ENCODE measurements at regions of chr18 and their contacts with region 1.

Region 1: DNA sequence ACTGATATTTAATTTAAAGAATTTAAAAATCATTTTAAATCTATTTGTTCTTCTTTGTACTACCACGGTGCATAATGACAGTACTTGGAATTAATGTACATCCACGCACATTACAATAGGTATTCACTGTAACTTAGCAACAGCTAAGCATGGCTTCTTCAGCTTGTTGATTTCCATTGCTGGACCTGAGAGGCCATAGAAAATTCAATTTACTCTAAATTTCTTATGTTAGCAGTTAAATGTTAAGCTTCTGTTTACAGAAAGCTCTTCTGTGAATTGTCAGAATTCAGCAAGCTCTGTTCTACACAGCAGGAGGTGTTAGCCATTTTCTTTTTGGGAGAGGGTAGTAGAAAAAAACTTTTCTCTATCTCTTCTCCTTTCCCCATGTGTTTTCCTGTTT is 1149.3 kb upstream of the CDH2 start:
- DNase-seq: no peak
- ATAC-seq: no peak
- H3K4me3 Mint-ChIP-seq: no peak overlapping the region
- H3K27ac Mint-ChIP-seq: no peak overlapping the region
- H3K4me1 Mint-ChIP-seq: no peaks in the 10 kb centered on the region
- H3K27me3 Mint-ChIP-seq: no peaks in the 10 kb centered on the region
- CTCF ChIP-seq: no peak

Region 2: DNA sequence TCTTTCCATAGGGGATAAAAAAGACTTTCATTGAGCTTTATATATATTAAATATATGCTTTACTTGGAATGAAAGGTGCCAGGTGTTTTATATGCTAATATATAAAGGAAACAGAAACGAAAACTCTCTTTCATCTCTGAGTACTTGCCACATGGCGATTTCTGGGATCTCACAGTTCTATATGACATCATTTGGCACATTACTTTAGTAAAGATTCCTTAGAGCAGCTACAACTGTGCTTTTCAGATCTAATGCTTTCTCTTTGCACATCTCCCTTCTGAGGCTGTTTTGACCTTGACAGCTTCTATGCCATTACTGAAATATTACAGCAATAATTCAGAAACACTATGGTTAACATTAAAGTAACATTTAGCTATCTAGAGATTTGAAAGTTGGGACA is 66.4 kb before region 1 on chr18:
- CTCF ChIA-PET with region 1: no interaction called
- POLR2A ChIA-PET with region 1: no interaction called
- intact Hi-C with region 1: loop called (anchors 10 kb)
- DNase-seq: no peak
- ATAC-seq: no peak
- H3K4me3 Mint-ChIP-seq: no peak overlapping the region
- H3K27ac Mint-ChIP-seq: no peak overlapping the region
- H3K4me1 Mint-ChIP-seq: no peaks in the 10 kb centered on the region
- H3K27me3 Mint-ChIP-seq: no peaks in the 10 kb centered on the region
- CTCF ChIP-seq: no peak

Measured in activated CD8-positive, alpha-beta T cell treated with anti-CD3 and anti-CD28 coated beads for 36 hours (primary cell).